GM12878 (cell line): ENCODE measurements at regions of chr10 and their contacts with region 1.

Region 1: DNA sequence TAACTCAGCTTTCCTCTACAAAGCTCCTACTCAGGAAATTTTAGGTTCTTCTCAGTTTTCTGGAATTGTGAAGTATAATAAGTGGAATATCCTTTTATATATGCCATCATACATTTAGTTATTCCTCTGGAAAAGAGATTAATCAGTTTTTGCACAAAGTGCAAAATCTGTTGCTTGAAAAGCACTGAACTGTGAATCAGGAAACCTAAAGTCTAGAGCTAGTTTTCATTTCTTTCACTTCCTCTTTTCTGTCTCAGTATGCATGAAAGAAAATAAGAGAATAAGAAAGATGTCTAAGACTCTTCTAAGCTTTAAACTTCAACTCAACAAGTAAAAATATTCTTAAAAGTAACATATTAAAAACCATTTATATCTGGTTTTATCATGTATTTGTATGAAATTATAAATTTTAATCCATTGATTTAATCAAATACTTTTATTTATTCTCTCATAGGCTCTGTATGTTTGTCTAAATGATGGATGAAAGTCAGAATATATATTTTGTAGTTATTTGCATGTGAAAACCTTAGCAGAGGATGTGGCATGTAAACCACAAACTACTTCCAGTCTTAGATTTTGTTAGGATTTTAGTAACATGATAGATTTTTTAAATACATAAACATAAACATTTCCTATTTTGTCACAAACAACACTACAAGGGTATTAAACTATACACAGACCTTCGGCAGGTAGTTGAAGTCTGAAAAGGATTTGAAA is 1073.0 kb downstream of the XPNPEP1 start:
- DNase-seq: peak; percentile 27
- ATAC-seq: peak; percentile 88
- H3K4me3 ChIP-seq: peak overlapping the region; percentile 26; the same call in 1 of the 2 replicates
- H3K27ac ChIP-seq: no peak overlapping the region
- H3K4me1 ChIP-seq: peaks cover 16% of the 10 kb centered on the region
- H3K27me3 ChIP-seq: no peaks in the 10 kb centered on the region
- CTCF ChIP-seq: no peak
- EP300 ChIP-seq: peak in 1 of 2 experiments; percentile 64; a peak in 2 of 4 replicates
- POLR2A ChIP-seq: no peak
- RAD21 ChIP-seq: no peak

Region 2: GRCh38 chr10:108696792-108697477 is 153.4 kb before region 1 on chr10:
- CTCF ChIA-PET with region 1: no interaction called
- POLR2A ChIA-PET with region 1: no interaction called
- RAD21 ChIA-PET with region 1: no interaction called
- SMC1A ChIA-PET with region 1: no interaction called
- in situ Hi-C with region 1: no loop called
- intact Hi-C with region 1: loop called (anchors 2 kb)
- DNase-seq: peak; percentile 40
- ATAC-seq: peak; percentile 95
- H3K4me3 ChIP-seq: 0 out of 2 replicates have a peak overlapping the region, but pooled peaks have one; percentile 1
- H3K27ac ChIP-seq: peak overlapping the region; percentile 74
- H3K4me1 ChIP-seq: peaks cover 12% of the 10 kb centered on the region
- H3K27me3 ChIP-seq: no peaks in the 10 kb centered on the region
- CTCF ChIP-seq: no peak
- EP300 ChIP-seq: peak; percentile 31 to 35; a peak in 2 of 4 replicates
- POLR2A ChIP-seq: no peak
- RAD21 ChIP-seq: no peak

Region 3: GRCh38 chr10:108868881-108869280 is 18.6 kb after region 1 on chr10:
- CTCF ChIA-PET with region 1: no interaction called
- POLR2A ChIA-PET with region 1: no interaction called
- RAD21 ChIA-PET with region 1: no interaction called
- SMC1A ChIA-PET with region 1: no interaction called
- in situ Hi-C with region 1: no loop called
- intact Hi-C with region 1: no loop called
- DNase-seq: no peak
- ATAC-seq: no peak
- H3K4me3 ChIP-seq: no peak overlapping the region
- H3K27ac ChIP-seq: no peak overlapping the region
- H3K4me1 ChIP-seq: no peaks in the 10 kb centered on the region
- H3K27me3 ChIP-seq: no peaks in the 10 kb centered on the region
- CTCF ChIP-seq: no peak
- EP300 ChIP-seq: no peak
- POLR2A ChIP-seq: no peak
- RAD21 ChIP-seq: no peak

Region 4: DNA sequence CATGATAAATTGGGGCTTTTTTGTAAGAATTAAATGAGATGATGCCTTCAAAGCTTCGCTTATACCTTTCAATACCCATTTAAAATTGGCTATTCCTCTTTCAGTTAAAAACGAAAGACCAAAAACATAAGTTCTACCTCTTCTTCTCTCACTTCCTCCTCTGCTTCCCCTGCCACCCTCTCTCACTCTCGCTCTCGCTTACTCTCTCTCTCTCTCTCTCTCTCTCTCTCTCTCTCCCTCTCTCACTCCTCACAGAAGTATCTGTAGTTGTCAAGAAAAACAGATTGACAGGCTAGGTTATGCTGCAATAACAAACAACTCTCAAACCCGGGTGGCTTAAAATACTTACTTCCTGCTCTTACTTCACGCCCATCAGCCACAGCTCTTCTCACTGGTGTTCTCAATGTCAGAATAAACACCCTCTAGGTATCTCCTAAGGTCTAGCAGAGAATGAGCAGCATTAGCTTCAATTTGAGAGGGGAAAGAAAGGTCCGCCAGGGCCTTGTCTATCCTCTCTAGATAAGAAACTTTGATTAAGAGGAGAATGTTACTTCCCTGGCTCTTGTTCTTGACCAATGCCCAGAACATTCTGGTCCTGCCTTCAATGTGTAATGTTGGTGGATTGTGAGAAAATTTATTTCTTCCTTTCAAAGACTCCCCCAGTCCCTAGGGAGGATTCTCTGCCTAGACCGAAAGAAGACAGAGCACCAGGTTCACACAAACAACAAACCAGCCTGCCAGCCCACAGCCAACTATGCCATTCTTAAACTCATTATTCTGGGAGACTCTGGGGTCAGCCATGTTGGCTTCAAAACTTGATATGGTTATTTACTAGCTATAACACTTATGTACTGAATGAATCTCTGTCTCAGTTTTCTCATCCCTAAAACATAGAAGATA is 44.4 kb after region 1 on chr10:
- CTCF ChIA-PET with region 1: no interaction called
- POLR2A ChIA-PET with region 1: no interaction called
- RAD21 ChIA-PET with region 1: no interaction called
- SMC1A ChIA-PET with region 1: interaction called, 3 read pairs
- in situ Hi-C with region 1: no loop called
- intact Hi-C with region 1: loop called (anchors 2 kb)
- DNase-seq: peak; percentile 47
- ATAC-seq: peak; percentile 83
- H3K4me3 ChIP-seq: no peak overlapping the region
- H3K27ac ChIP-seq: no peak overlapping the region
- H3K4me1 ChIP-seq: no peaks in the 10 kb centered on the region; the same call in 1 of the 2 replicates
- H3K27me3 ChIP-seq: no peaks in the 10 kb centered on the region
- CTCF ChIP-seq: no peak
- EP300 ChIP-seq: peak; percentile 30 to 42; a peak in 1 of 4 replicates
- POLR2A ChIP-seq: no peak
- RAD21 ChIP-seq: no peak